Psoas muscle (tissue), 8 donors: ENCODE measurements at regions of chr14 and their contacts with region 1.

Region 1: GRCh38 chr14:69260861-69261564 is 1.1 kb downstream of the GALNT16 start:
- DNase-seq: peak; percentile 50 to 67
- ATAC-seq: peak; percentile 59 to 71 (median 68)
- H3K4me3 ChIP-seq: peak overlapping the region; percentile 74
- H3K27ac ChIP-seq: peak overlapping the region; percentile 36
- H3K4me1 ChIP-seq: peaks cover 6% of the 10 kb centered on the region
- H3K27me3 ChIP-seq: peaks cover 0 to 71% (median 15%) of the 10 kb centered on the region in 3 donors
- CTCF ChIP-seq: peak; percentile 63

Region 2: DNA sequence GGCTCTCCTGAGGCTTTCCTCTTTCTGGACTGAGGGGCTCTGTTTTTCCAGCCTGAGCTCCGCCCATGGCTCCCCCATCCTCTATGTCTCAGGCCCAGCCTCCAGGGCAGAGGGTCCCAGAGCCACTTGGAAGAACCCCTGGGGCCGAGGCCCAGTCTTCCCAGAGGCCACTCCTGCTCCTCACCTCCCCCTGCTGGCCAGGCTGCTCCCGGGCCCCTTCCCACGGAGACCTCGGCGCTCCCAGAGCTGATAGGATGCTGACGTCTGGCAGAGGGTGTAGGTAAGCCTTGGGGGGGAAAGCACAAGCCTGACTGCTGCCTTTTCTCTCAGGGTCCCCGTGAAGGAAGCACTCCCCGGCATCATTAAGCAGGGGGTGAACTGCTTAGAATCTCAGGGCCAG is 85.7 kb after region 1 on chr14:
- intact Hi-C with region 1: loop called in 1 of 2 experiments (anchors 5 kb)
- DNase-seq: peak in 1 of 2 donors; percentile 34
- ATAC-seq: peak in 2 of 4 donors; percentile 47 to 57
- H3K4me3 ChIP-seq: no peak overlapping the region
- H3K27ac ChIP-seq: no peak overlapping the region
- H3K4me1 ChIP-seq: no peaks in the 10 kb centered on the region
- H3K27me3 ChIP-seq: peaks cover 0 to 1% (median 0%) of the 10 kb centered on the region in 3 donors
- CTCF ChIP-seq: peak; percentile 43

Region 3: DNA sequence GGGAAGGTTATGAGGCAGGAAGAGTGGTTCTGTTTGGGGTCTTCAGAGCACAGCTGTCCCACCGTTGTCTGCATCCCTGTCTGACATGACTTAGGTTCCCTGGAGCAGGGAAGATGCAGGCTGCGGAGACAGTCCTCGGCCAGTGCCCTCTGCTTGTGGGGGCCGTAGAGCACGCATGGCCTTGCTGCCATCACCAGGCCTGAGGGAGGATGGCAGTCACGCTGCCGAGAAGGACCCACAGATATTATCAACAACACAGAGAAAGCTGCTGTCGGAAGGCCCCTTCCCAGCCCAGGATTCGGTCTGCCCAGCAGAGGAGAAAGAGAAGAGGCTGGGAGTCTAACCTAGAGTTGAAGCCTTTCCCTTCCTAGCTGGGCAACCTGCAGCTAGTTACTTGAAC is 102.0 kb after region 1 on chr14:
- intact Hi-C with region 1: loop called in 1 of 2 experiments (anchors 5 kb)
- DNase-seq: peak; percentile 27 to 66
- ATAC-seq: peak in 3 of 4 donors; percentile 42 to 67 (median 53)
- H3K4me3 ChIP-seq: no peak overlapping the region
- H3K27ac ChIP-seq: no peak overlapping the region
- H3K4me1 ChIP-seq: no peaks in the 10 kb centered on the region
- H3K27me3 ChIP-seq: no peaks in the 10 kb centered on the region
- CTCF ChIP-seq: peak; percentile 37